CD8-positive, alpha-beta T cell (primary cell): ENCODE measurements at regions of chr6 and their contacts with region 1.

Region 1: DNA sequence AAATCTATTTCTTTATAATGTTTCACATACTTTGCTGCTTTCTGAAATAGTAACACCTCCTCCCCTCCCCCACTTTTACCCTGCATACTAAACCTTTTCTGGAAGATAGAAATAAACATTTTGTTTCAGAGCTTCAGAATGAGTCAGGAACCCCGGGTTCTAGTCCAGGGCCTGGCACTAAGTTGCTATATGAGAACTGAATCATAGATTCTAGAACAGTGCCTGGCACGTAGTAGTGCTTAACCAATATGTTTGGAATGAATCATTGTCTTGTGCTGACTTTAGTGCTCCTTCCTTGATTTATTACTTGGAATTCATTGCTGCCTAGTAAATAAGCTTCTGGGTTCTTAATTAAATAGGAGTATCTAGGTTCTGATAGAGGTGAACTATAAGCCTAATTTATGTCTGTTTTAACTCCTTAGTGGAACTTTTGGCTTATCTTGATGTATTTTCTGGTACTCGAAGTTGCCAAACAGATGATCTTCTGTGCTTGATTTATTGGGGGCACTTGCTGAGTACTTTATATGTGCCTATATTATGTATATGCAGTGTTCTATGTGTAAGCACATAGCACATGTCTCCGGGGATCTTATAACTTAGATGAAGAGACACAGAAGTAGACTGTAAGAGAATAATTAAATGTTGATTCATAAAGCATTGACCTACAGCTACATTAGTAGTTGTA is 18.6 kb downstream of the TAB2 start:
- DNase-seq: peak in 1 of 9 experiments; percentile 18
- ATAC-seq: no peak
- H3K4me3 ChIP-seq: no peak overlapping the region
- H3K4me3 Mint-ChIP-seq: peak overlapping the region; percentile 21
- H3K27ac ChIP-seq: no peak overlapping the region
- H3K27ac Mint-ChIP-seq: peak overlapping the region; percentile 18
- H3K4me1 ChIP-seq: peaks cover 64% of the 10 kb centered on the region
- H3K4me1 Mint-ChIP-seq: peaks cover 87% of the 10 kb centered on the region
- H3K27me3 ChIP-seq: no peaks in the 10 kb centered on the region
- H3K27me3 Mint-ChIP-seq: no peaks in the 10 kb centered on the region
- CTCF ChIP-seq: no peak

Region 2: DNA sequence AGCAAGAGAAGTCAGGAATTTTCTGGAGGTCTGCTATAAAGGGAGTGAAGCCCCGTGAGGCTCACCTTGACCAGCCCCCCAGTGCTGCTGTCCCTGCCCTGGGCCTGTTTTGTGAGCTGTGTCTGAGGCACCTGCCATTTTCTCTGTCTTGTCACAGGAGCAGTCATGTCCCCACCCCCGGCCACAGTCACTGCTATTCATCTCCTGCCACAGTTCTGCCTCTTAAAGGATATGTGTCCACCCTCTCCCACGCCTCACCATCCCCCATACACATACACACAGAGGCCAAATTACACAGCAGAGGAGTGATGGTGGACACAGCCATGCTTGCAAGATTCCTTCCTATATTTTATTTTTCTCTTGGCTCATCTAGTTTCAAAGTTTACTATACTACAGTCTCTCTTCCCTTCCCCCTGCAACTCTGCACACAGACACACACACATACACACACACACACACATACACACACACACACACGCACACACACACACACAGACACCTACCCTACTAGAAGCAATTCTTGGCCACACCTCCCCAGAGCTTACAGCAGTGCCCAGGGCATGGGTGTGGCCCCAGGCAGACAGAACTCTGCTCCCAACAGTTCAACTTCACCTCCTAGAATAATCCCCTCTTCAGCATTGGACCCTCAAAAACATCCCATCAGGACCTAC is 87.2 kb before region 1 on chr6:
- CTCF ChIA-PET with region 1: no interaction called
- POLR2A ChIA-PET with region 1: no interaction called
- intact Hi-C with region 1: no loop called
- DNase-seq: peak in 1 of 9 experiments; percentile 23
- ATAC-seq: no peak
- H3K4me3 ChIP-seq: no peak overlapping the region
- H3K4me3 Mint-ChIP-seq: no peak overlapping the region
- H3K27ac ChIP-seq: no peak overlapping the region
- H3K27ac Mint-ChIP-seq: no peak overlapping the region
- H3K4me1 ChIP-seq: peaks cover 16% of the 10 kb centered on the region
- H3K4me1 Mint-ChIP-seq: peaks cover 24% of the 10 kb centered on the region
- H3K27me3 ChIP-seq: no peaks in the 10 kb centered on the region
- H3K27me3 Mint-ChIP-seq: no peaks in the 10 kb centered on the region
- CTCF ChIP-seq: no peak

Region 3: DNA sequence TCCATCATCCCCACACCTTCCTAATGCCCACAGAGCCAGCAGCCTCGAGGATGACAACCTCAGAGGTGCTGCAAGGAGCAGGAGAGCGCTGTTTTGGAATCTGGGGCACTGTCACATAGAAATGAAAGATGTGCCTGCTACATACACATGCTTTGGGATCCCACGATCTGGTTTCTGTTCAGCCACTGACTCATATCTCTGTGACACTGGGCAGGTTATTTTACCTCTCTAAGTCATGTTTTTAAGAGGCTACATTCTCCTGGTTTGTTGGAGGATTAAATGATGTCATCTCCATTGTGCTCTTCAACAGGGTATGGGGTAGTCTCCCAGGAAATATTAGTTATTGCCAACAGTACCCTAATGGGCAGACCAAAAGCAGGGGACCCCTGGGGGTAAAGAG is 51.2 kb before region 1 on chr6:
- CTCF ChIA-PET with region 1: no interaction called
- POLR2A ChIA-PET with region 1: no interaction called
- intact Hi-C with region 1: no loop called
- DNase-seq: no peak
- ATAC-seq: no peak
- H3K4me3 ChIP-seq: no peak overlapping the region
- H3K4me3 Mint-ChIP-seq: no peak overlapping the region
- H3K27ac ChIP-seq: no peak overlapping the region
- H3K27ac Mint-ChIP-seq: no peak overlapping the region
- H3K4me1 ChIP-seq: no peaks in the 10 kb centered on the region
- H3K4me1 Mint-ChIP-seq: no peaks in the 10 kb centered on the region
- H3K27me3 ChIP-seq: no peaks in the 10 kb centered on the region
- H3K27me3 Mint-ChIP-seq: no peaks in the 10 kb centered on the region
- CTCF ChIP-seq: no peak

Region 4: GRCh38 chr6:149324428-149324827 is 11.6 kb before region 1 on chr6:
- CTCF ChIA-PET with region 1: interaction called, 4 read pairs
- POLR2A ChIA-PET with region 1: no interaction called
- intact Hi-C with region 1: loop called in 1 of 2 experiments (anchors 2 kb)
- DNase-seq: no peak
- ATAC-seq: no peak
- H3K4me3 ChIP-seq: no peak overlapping the region
- H3K4me3 Mint-ChIP-seq: peak overlapping the region; percentile 33
- H3K27ac ChIP-seq: no peak overlapping the region
- H3K27ac Mint-ChIP-seq: no peak overlapping the region
- H3K4me1 ChIP-seq: peaks cover 78% of the 10 kb centered on the region
- H3K4me1 Mint-ChIP-seq: peaks cover 79% of the 10 kb centered on the region
- H3K27me3 ChIP-seq: no peaks in the 10 kb centered on the region
- H3K27me3 Mint-ChIP-seq: no peaks in the 10 kb centered on the region
- CTCF ChIP-seq: no peak

Region 5: GRCh38 chr6:149711711-149712110 is 375.6 kb after region 1 on chr6:
- CTCF ChIA-PET with region 1: no interaction called
- POLR2A ChIA-PET with region 1: no interaction called
- intact Hi-C with region 1: no loop called
- DNase-seq: no peak
- ATAC-seq: no peak
- H3K4me3 ChIP-seq: no peak overlapping the region
- H3K4me3 Mint-ChIP-seq: no peak overlapping the region
- H3K27ac ChIP-seq: no peak overlapping the region
- H3K27ac Mint-ChIP-seq: no peak overlapping the region
- H3K4me1 ChIP-seq: peaks cover 46% of the 10 kb centered on the region
- H3K4me1 Mint-ChIP-seq: peaks cover 78% of the 10 kb centered on the region
- H3K27me3 ChIP-seq: peaks cover 0 to 2% of the 10 kb centered on the region in 2 experiments
- H3K27me3 Mint-ChIP-seq: no peaks in the 10 kb centered on the region
- CTCF ChIP-seq: no peak